ENCODE measurements at regions of chr1 and their contacts with region 1.

Region 1: DNA sequence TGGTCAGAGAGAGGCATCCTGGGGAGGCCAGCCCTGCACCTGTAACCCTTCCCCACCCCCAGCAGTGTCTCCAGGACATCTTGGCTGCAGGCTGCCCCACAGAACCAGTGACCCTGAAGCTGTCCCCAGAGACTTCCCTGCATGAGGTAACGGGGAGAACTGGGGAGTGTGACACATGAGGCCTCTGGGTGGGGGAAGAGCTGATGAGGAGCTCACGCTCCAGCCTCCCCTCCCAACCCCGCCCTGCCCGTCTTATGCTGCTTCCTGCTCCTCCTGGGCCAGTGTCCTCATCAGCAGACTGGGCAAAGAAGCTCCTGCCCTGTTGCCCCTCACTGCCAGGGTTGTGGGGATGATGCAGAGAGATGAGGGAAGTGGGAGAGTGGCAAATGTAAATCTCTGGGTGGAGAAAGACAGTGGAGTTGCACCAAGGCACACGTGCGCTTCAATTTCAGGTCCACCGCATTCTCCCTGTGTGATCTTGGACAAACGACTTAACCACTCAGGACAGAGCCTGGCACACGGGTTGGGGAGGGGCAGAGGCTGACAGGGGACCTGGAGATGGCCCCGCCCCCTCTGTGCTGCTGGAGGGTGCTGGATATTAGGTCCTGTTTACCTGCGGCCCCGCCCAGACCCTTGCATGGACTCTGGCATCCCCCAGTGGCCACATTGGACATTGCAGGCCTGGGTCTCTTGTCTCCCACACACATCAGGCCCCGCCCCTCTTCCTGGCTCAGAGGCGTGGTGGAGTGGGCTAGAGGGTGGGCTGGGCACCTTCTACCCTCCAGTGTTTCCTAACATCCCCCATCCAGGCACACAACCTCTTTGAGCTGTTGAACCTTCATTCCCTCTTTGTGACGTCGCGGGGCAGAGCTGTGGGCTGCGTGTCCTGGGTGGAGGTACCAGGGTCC is 12.3 kb downstream of the CLCNKB start:
- DNase-seq: peak; percentile 69 to 85 (median 78)
- H3K4me3 ChIP-seq: no peak overlapping the region
- H3K4me3 Mint-ChIP-seq: peak overlapping the region in 2 of 8 donors; percentile 11 to 43
- H3K27ac ChIP-seq: no peak overlapping the region
- H3K27ac Mint-ChIP-seq: peak overlapping the region in 2 of 7 donors; percentile 52 to 57
- H3K4me1 ChIP-seq: peaks cover 3% of the 10 kb centered on the region
- H3K4me1 Mint-ChIP-seq: peaks cover 4 to 7% (median 6%) of the 10 kb centered on the region in 4 donors
- H3K27me3 ChIP-seq: no peaks in the 10 kb centered on the region
- H3K27me3 Mint-ChIP-seq: peaks cover 2 to 5% of the 10 kb centered on the region in 2 donors

Region 2: GRCh38 chr1:15674386-15675159 is 381.3 kb before region 1 on chr1:
- CTCF ChIA-PET with region 1: no interaction called
- POLR2A ChIA-PET with region 1: no interaction called
- intact Hi-C with region 1: no loop called
- DNase-seq: no peak
- H3K4me3 ChIP-seq: no peak overlapping the region
- H3K4me3 Mint-ChIP-seq: no peak overlapping the region
- H3K27ac ChIP-seq: no peak overlapping the region
- H3K27ac Mint-ChIP-seq: no peak overlapping the region
- H3K4me1 ChIP-seq: no peaks in the 10 kb centered on the region
- H3K4me1 Mint-ChIP-seq: peaks cover 0 to 2% (median 0%) of the 10 kb centered on the region in 4 donors
- H3K27me3 ChIP-seq: no peaks in the 10 kb centered on the region
- H3K27me3 Mint-ChIP-seq: no peaks in the 10 kb centered on the region

Region 3: GRCh38 chr1:15788624-15789301 is 267.1 kb before region 1 on chr1:
- CTCF ChIA-PET with region 1: interaction called, 11 read pairs
- POLR2A ChIA-PET with region 1: interaction called, 3 read pairs
- intact Hi-C with region 1: loop called (anchors 1 kb)
- DNase-seq: no peak
- H3K4me3 ChIP-seq: no peak overlapping the region
- H3K4me3 Mint-ChIP-seq: no peak overlapping the region
- H3K27ac ChIP-seq: no peak overlapping the region
- H3K27ac Mint-ChIP-seq: no peak overlapping the region
- H3K4me1 ChIP-seq: peaks cover 6% of the 10 kb centered on the region
- H3K4me1 Mint-ChIP-seq: peaks cover 2 to 5% (median 4%) of the 10 kb centered on the region in 4 donors
- H3K27me3 ChIP-seq: no peaks in the 10 kb centered on the region
- H3K27me3 Mint-ChIP-seq: peaks cover 0 to 7% of the 10 kb centered on the region in 2 donors

Region 4: GRCh38 chr1:16009030-16009709 is 46.7 kb before region 1 on chr1:
- CTCF ChIA-PET with region 1: interaction called, 9 read pairs
- POLR2A ChIA-PET with region 1: no interaction called
- intact Hi-C with region 1: loop called (anchors 1 kb)
- DNase-seq: peak; percentile 53 to 64 (median 59)
- H3K4me3 ChIP-seq: no peak overlapping the region
- H3K4me3 Mint-ChIP-seq: no peak overlapping the region
- H3K27ac ChIP-seq: no peak overlapping the region
- H3K27ac Mint-ChIP-seq: peak overlapping the region in 1 of 7 donors; percentile 64
- H3K4me1 ChIP-seq: peaks cover 13% of the 10 kb centered on the region
- H3K4me1 Mint-ChIP-seq: peaks cover 0 to 4% (median 4%) of the 10 kb centered on the region in 4 donors
- H3K27me3 ChIP-seq: no peaks in the 10 kb centered on the region
- H3K27me3 Mint-ChIP-seq: peaks cover 2 to 9% of the 10 kb centered on the region in 2 donors

Region 5: DNA sequence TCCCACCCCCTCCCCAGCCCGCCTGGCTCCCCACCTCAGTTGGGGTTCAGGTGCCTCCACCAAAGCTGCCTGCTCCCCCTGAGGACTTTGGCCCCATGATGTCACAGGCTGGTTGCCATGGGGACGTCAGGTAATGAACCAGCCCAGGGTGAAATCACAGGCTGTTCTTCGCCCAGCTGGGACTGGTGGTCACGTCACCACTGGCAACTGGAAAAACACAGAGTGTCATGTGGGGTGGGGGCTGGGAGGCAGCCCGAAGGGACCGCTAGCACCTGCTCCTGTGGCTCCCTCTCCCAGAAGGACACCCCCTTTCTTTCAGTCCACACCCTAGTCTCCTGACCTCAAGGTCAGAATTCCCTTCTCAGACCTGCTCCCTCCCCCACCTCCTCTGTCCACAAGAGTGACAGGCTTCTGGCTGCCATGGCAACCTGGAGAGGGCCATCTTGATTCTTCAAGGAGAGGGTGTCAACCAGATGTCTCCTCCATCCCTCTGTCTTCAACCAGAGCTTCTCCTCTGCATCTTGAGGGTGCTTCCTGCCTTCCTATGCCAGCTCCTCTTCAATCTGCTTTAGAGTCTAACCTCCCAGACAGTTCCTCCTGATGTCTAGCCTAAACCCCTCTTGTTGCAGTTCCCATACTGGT is 11.4 kb after region 1 on chr1:
- CTCF ChIA-PET with region 1: no interaction called
- POLR2A ChIA-PET with region 1: no interaction called
- intact Hi-C with region 1: no loop called
- DNase-seq: no peak
- H3K4me3 ChIP-seq: no peak overlapping the region
- H3K4me3 Mint-ChIP-seq: no peak overlapping the region
- H3K27ac ChIP-seq: no peak overlapping the region
- H3K27ac Mint-ChIP-seq: peak overlapping the region in 1 of 7 donors; percentile 41
- H3K4me1 ChIP-seq: peaks cover 30% of the 10 kb centered on the region
- H3K4me1 Mint-ChIP-seq: peaks cover 16 to 49% (median 33%) of the 10 kb centered on the region in 4 donors
- H3K27me3 ChIP-seq: no peaks in the 10 kb centered on the region
- H3K27me3 Mint-ChIP-seq: peaks cover 1 to 4% of the 10 kb centered on the region in 2 donors

Measured in CD4-positive, alpha-beta memory T cell (primary cell).